ENCODE measurements at regions of chr2 and their contacts with region 1.

Region 1: GRCh38 chr2:196291873-196292800 is 120.8 kb upstream of the STK17B start:
- DNase-seq: no peak
- ATAC-seq: peak in 6 of 8 donors; percentile 26 to 86 (median 36)
- H3K4me3 ChIP-seq: no peak overlapping the region
- H3K27ac ChIP-seq: peak overlapping the region in 7 of 10 donors; percentile 20 to 69 (median 49)
- H3K4me1 ChIP-seq: peaks cover 0 to 64% (median 36%) of the 10 kb centered on the region in 9 donors
- H3K27me3 ChIP-seq: no peaks in the 10 kb centered on the region
- CTCF ChIP-seq: no peak

Region 2: DNA sequence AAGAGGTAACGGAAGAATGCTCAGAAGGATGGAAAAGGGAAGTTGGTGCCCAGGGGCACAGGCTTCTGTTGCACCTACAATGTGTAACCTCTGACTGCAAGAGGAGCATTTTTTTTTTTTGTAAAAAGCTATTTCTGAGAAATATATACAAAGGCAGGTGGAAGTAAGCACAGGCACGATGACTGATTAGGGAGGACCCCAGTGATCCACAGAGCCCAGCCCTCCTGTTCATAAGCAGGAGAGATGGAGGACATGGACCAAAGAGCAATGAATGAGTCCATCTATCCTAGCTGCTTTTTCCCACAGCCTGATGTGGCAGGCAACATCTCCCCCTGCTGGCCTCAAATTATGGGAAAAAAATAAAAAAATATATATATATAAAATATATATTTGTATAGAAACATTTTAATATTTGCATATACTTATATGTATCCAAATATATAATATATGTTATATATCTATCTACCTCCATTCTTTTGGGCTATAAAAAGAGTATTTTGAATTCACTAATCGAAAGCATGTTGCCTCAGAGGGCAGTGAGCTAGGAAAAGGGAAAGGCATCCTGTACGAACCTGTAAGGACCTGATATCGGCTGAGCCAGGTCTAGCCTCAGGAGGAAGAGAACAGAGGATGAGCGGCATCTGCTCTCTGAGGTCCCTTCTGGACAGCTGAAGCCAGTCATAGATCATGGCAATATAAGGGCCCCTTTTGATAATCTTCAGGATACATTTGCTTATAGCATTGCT is 45.2 kb after region 1 on chr2:
- intact Hi-C with region 1: loop called in 1 of 10 experiments (anchors 5 kb)
- DNase-seq: no peak
- ATAC-seq: no peak
- H3K4me3 ChIP-seq: no peak overlapping the region
- H3K27ac ChIP-seq: peak overlapping the region in 1 of 10 donors; percentile 8
- H3K4me1 ChIP-seq: peaks cover 0 to 84% (median 22%) of the 10 kb centered on the region in 9 donors
- H3K27me3 ChIP-seq: no peaks in the 10 kb centered on the region
- CTCF ChIP-seq: peak; percentile 10 to 64 (median 56)

Region 3: GRCh38 chr2:196356332-196356731 is 64.2 kb after region 1 on chr2:
- intact Hi-C with region 1: no loop called
- DNase-seq: no peak
- ATAC-seq: no peak
- H3K4me3 ChIP-seq: peak overlapping the region in 6 of 10 donors; percentile 12 to 57 (median 44)
- H3K27ac ChIP-seq: peak overlapping the region in 1 of 10 donors; percentile 37
- H3K4me1 ChIP-seq: peaks cover 0 to 43% (median 6%) of the 10 kb centered on the region in 9 donors
- H3K27me3 ChIP-seq: no peaks in the 10 kb centered on the region
- CTCF ChIP-seq: no peak

Region 4: GRCh38 chr2:196459539-196459938 is 167.4 kb after region 1 on chr2:
- intact Hi-C with region 1: loop called in 3 of 10 experiments (anchors 2 to 5 kb)
- DNase-seq: no peak
- ATAC-seq: no peak
- H3K4me3 ChIP-seq: no peak overlapping the region
- H3K27ac ChIP-seq: no peak overlapping the region
- H3K4me1 ChIP-seq: no peaks in the 10 kb centered on the region
- H3K27me3 ChIP-seq: peaks cover 0 to 10% (median 0%) of the 10 kb centered on the region in 7 donors
- CTCF ChIP-seq: no peak

Region 5: GRCh38 chr2:196601430-196602306 is 309.5 kb after region 1 on chr2:
- intact Hi-C with region 1: loop called in 2 of 10 experiments (anchors 5 to 10 kb)
- DNase-seq: peak; percentile 37 to 81
- ATAC-seq: peak; percentile 82 to 99 (median 98)
- H3K4me3 ChIP-seq: no peak overlapping the region
- H3K27ac ChIP-seq: peak overlapping the region in 6 of 10 donors; percentile 19 to 77 (median 69)
- H3K4me1 ChIP-seq: peaks cover 0 to 13% (median 0%) of the 10 kb centered on the region in 9 donors
- H3K27me3 ChIP-seq: peaks cover 0 to 6% (median 0%) of the 10 kb centered on the region in 7 donors
- CTCF ChIP-seq: peak in 2 of 9 donors; percentile 20 to 22

Region 6: GRCh38 chr2:196758474-196759377 is 466.6 kb after region 1 on chr2:
- intact Hi-C with region 1: loop called in 4 of 10 experiments (anchors 5 to 10 kb)
- DNase-seq: no peak
- ATAC-seq: peak in 5 of 8 donors; percentile 47 to 86 (median 81)
- H3K4me3 ChIP-seq: no peak overlapping the region
- H3K27ac ChIP-seq: no peak overlapping the region
- H3K4me1 ChIP-seq: peaks cover 0 to 8% (median 0%) of the 10 kb centered on the region in 9 donors
- H3K27me3 ChIP-seq: no peaks in the 10 kb centered on the region
- CTCF ChIP-seq: peak in 8 of 9 donors; percentile 9 to 61 (median 48)

Measured in heart right ventricle (tissue), 16 donors.